ENCODE measurements at regions of chr4 and their contacts with region 1.

Region 1: DNA sequence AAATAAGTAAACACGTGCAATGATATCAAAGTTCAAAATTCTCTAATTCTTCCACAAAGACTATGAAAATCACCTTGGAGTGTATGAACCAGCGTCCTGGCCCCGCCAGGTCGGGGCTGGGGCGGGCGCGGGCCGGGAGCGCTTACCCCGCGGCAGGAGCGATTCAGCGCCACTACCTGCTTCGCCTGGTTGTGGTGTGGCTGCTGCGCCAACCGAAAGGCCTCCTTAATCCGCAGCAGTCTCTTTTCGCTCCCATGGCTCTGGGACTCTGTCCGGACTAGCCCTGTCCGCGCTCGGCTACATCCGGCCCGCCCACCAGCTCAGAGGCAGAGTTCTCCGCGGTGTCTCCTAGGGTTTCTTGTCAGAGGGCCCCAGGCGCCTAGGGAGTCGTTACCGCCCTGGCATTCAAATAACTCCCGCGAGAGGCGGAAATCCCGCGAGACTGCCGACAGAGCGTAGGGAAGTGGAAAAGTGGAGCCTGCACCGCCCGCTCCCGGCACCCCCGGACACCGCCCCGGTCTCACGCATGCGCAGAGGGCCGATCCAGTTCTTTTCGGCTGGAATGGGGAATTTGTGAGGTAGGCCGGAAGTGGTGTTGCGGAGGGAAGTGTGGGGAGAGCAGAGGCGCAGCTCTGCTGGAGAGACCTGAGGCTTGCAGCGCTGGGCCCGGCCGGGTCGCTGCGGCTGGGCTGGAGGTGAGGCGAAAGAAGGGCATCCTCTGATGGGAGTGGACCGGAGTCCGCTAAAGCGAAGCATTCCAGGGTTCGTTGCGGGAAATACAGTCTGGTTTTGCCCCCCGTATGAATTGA is at the start of gene FAM200B:
- DNase-seq: peak; percentile 98
- H3K4me3 Mint-ChIP-seq: peak within 1 kb of the TSS; percentile 94
- H3K27ac Mint-ChIP-seq: peak within 1 kb of the TSS; percentile 99
- H3K4me1 Mint-ChIP-seq: peaks cover 43% of the 10 kb centered on the region
- H3K27me3 Mint-ChIP-seq: no peaks in the 10 kb centered on the region
- total RNA-seq, gene FAM200B: 15.9 to 24.3 TPM

Region 2: GRCh38 chr4:15665753-15666365 is 15.6 kb before region 1 on chr4:
- CTCF ChIA-PET with region 1: interaction called, 10 read pairs
- POLR2A ChIA-PET with region 1: no interaction called
- DNase-seq: no peak
- H3K4me3 Mint-ChIP-seq: no peak overlapping the region
- H3K27ac Mint-ChIP-seq: peak overlapping the region; percentile 31
- H3K4me1 Mint-ChIP-seq: peaks cover 19% of the 10 kb centered on the region
- H3K27me3 Mint-ChIP-seq: no peaks in the 10 kb centered on the region

Region 3: DNA sequence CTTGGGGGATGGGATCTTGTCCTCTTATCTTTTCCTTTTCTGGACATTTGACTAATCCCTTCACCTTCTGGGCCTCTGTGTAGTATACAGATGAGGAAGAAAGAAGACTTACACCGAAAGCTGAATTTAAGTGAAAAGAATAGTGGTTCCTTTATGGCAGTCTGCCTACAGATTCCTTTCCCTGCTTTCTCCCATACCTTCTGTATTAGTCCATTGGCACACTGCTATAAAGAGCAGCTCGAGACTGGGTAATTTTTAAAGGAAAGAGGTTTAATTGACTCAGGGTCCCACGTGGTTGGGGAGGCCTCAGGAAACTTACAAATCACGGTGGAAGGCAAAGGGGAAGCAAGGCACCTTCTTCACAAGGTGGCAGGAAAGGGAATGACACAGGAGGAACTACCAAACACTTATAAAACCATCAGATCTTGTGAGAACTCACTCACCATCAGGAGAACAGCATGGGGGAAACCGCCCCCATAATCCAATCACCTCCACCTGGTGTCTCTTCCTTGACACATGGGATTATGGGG is 62.7 kb after region 1 on chr4:
- CTCF ChIA-PET with region 1: no interaction called
- POLR2A ChIA-PET with region 1: no interaction called
- DNase-seq: no peak
- H3K4me3 Mint-ChIP-seq: no peak overlapping the region
- H3K27ac Mint-ChIP-seq: no peak overlapping the region
- H3K4me1 Mint-ChIP-seq: peaks cover 14% of the 10 kb centered on the region
- H3K27me3 Mint-ChIP-seq: no peaks in the 10 kb centered on the region

Region 4: GRCh38 chr4:16227462-16227868 is 546.1 kb after region 1 on chr4:
- CTCF ChIA-PET with region 1: no interaction called
- POLR2A ChIA-PET with region 1: interaction called, 14 read pairs
- DNase-seq: peak; percentile 19
- H3K4me3 Mint-ChIP-seq: peak overlapping the region; percentile 91
- H3K27ac Mint-ChIP-seq: peak overlapping the region; percentile 96
- H3K4me1 Mint-ChIP-seq: peaks cover 50% of the 10 kb centered on the region
- H3K27me3 Mint-ChIP-seq: no peaks in the 10 kb centered on the region